HEK293 (cell line): ENCODE measurements at regions of chr17 and their contacts with region 1.

Region 1: DNA sequence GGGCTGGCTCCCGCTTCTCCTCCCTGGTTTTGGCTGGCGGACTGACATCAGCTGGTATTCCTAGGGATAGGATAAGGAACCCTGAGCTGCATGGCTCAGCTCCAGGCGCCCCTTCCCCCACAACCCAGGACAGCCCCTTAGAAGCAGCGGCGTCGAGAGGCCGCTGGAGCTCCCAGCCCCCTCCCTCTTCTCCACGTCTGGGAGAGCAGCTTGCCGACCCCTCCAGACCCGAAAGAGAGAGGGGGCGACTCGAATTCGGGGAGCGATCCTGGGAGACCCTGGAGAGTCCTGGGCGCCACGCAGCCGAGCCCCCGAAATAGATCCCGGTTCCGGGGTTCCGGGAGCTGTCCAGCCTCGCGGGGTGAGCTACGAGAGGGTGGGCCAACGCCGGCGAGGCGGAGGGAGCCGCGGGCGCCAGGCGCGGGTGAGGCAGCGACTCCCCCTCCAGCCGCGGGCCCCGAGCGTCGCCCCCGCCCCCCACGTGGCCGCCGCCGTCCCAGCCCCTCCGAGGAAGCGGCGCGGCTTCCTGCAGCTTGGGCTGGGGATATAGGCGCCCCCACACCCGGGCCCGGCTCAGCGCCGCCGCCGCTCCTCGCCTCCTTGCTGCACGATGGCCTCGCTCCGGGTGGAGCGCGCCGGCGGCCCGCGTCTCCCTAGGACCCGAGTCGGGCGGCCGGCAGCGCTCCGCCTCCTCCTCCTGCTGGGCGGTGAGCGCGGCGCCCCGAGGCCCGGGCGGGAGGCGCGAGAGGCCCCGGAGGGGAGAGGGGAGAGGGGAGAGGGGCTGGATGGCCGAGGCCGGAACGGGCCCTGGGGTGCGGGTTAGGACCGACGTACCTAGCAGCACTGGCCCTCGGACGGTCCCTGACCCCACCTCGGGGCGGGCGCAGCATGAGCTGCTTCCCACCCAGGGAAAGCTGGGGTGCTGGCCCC is at the start of gene RAMP2:
- H3K4me3 ChIP-seq: no peak within 1 kb of the TSS
- H3K27ac ChIP-seq: no peak within 1 kb of the TSS; the same call in 1 of the 2 replicates
- H3K4me1 ChIP-seq: peaks cover 2% of the 10 kb centered on the region; the same call in 1 of the 2 replicates
- CTCF ChIP-seq: no peak

Region 2: DNA sequence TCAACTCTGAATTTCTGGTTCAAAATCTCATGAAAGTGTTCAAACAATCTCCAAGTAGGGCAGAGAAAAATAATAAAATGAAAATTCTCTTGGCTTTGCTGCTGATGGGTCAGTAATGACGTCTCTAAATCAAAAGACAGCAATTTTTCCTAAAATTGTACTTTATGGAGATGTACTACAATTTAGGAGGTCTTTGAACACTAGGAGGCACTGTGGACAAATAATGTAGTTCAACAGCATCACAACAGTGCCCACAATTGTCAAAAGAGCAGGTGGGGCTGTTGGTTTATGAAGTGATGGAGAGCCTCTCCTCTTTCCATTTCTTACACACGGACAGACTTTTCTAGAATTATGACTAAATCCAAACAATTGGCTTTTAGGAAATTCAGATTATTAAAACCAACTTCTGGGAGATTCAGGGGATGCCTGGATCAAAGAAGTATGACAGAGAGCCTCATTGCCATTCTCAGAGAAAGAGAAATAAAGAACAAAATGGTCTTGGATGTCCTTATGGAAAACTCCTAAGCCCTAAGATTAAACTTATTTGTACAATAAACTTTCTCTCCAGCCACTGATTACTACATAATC is 39.8 kb before region 1 on chr17:
- CTCF ChIA-PET with region 1: interaction called, 41 read pairs
- POLR2A ChIA-PET with region 1: no interaction called
- H3K4me3 ChIP-seq: no peak overlapping the region
- H3K27ac ChIP-seq: no peak overlapping the region
- H3K4me1 ChIP-seq: no peaks in the 10 kb centered on the region
- CTCF ChIP-seq: no peak

Region 3: GRCh38 chr17:42744806-42745617 is 15.9 kb before region 1 on chr17 and contains the start of gene EZH1:
- CTCF ChIA-PET with region 1: interaction called, 46 read pairs
- POLR2A ChIA-PET with region 1: interaction called, 5 read pairs
- H3K4me3 ChIP-seq: peak within 1 kb of the TSS; percentile 73
- H3K27ac ChIP-seq: peak within 1 kb of the TSS; percentile 79
- H3K4me1 ChIP-seq: peaks cover 9% of the 10 kb centered on the region
- CTCF ChIP-seq: no peak

Region 4: GRCh38 chr17:42773290-42774035 is 12.5 kb after region 1 on chr17 and contains the start of gene VPS25:
- CTCF ChIA-PET with region 1: interaction called, 32 read pairs
- POLR2A ChIA-PET with region 1: interaction called, 5 read pairs
- H3K4me3 ChIP-seq: peak within 1 kb of the TSS; percentile 94
- H3K27ac ChIP-seq: peak within 1 kb of the TSS; percentile 64
- H3K4me1 ChIP-seq: peaks cover 4% of the 10 kb centered on the region; the same call in 1 of the 2 replicates
- CTCF ChIP-seq: peak; percentile 79

Region 5: DNA sequence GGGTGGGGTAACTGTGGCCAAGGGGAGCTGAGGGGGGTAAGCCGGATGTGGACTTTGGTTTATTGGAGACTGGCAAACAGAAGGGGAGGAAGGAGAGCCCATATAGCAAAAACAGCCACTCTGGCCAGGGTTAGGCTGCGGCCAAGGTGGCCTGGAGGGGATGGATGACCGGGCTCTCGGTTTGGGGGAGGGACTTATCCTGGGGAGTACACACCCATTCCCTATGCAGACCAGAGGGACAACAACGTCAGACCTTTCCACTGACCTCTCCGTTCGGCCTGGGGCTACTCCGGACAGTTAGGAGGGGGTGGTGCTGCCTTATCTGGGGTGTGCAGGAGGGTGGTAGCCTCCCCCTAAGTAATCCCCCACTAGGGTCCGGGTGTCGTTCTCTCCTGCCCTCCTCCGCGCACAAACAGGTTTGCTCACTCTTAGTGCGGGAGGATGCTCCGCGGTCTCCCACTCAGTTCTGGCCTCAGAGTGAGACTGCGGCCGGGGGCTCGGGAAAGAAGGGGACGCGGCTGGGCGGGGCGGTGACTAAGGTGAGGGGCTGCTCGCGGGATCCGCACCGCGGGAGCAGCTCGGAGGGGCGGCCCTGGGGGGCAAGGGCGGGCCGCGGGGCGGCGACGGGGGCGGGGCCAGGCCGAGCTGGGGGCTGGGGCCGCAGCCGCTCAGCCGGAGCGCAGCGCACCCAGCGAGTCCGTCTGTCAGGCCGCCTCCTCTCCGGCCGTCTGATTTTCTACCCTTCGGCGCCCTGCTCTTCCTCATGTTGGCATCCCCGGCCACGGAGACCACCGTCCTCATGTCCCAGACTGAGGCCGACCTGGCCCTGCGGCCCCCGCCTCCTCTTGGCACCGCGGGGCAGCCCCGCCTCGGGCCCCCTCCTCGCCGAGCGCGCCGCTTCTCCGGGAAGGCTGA is 19.3 kb after region 1 on chr17 and contains the start of gene WNK4:
- CTCF ChIA-PET with region 1: interaction called, 32 read pairs
- POLR2A ChIA-PET with region 1: interaction called, 4 read pairs
- H3K4me3 ChIP-seq: peak within 1 kb of the TSS; percentile 45
- H3K27ac ChIP-seq: peak within 1 kb of the TSS; percentile 11; the same call in 1 of the 2 replicates
- H3K4me1 ChIP-seq: peaks cover 5% of the 10 kb centered on the region; the same call in 1 of the 2 replicates
- CTCF ChIP-seq: no peak